Common myeloid progenitor, CD34-positive (primary cell): ENCODE measurements at regions of chr10 and their contacts with region 1.

Region 1: GRCh38 chr10:17409170-17409733 is 45.1 kb downstream of the ST8SIA6 start:
- DNase-seq: peak in 2 of 3 donors; percentile 53 to 56
- H3K4me3 ChIP-seq: no peak overlapping the region
- H3K27ac ChIP-seq: no peak overlapping the region
- H3K4me1 ChIP-seq: peaks cover 0 to 37% (median 18%) of the 10 kb centered on the region in 4 experiments
- H3K27me3 ChIP-seq: no peaks in the 10 kb centered on the region

Region 2: DNA sequence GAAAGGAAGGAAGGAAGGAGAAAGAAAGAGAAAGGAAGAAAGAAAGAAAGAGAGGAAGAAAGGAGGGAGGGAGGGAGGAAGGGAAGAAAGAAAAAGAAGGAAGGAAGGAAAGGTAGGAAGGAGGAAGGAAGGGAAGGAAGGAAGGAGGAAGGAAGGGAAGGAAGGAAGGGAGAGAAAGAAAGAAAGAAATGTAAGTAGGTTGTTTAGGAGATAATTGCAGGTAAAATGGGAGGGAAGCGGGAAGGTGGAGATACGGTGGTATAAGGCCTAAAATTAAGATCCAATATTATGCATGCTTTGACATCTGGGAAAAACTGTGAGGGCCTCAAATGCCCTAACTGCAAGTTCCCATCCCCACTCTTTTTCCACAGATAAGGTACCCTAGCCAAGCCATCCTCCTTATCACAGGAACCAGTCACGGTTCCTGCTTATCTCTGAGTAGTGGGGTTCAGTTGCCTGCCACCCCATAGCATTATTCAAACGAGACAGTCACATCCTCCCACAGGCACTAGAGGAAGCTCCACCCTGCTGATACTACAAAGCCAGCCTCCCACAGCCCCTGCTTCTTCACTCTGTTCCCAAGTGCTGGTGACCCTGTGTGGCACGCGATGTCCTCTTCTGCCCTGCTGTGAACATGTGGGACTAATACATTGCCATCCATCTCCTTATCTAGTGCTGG is 16.5 kb after region 1 on chr10:
- CTCF ChIA-PET with region 1: interaction called, 79 read pairs
- POLR2A ChIA-PET with region 1: interaction called, 9 read pairs
- DNase-seq: peak; percentile 95 to 97 (median 96)
- H3K4me3 ChIP-seq: peak overlapping the region in 3 of 7 experiments; percentile 3 to 37 (median 17)
- H3K27ac ChIP-seq: peak overlapping the region; percentile 96 to 97
- H3K4me1 ChIP-seq: peaks cover 19 to 88% (median 70%) of the 10 kb centered on the region in 4 experiments
- H3K27me3 ChIP-seq: no peaks in the 10 kb centered on the region

Region 3: GRCh38 chr10:17474595-17475323 is 65.5 kb after region 1 on chr10:
- CTCF ChIA-PET with region 1: interaction called, 13 read pairs
- POLR2A ChIA-PET with region 1: no interaction called
- DNase-seq: peak; percentile 54 to 59 (median 55)
- H3K4me3 ChIP-seq: peak overlapping the region in 3 of 7 experiments; percentile 6 to 25 (median 9)
- H3K27ac ChIP-seq: no peak overlapping the region
- H3K4me1 ChIP-seq: peaks cover 2 to 27% (median 16%) of the 10 kb centered on the region in 4 experiments
- H3K27me3 ChIP-seq: no peaks in the 10 kb centered on the region

Region 4: DNA sequence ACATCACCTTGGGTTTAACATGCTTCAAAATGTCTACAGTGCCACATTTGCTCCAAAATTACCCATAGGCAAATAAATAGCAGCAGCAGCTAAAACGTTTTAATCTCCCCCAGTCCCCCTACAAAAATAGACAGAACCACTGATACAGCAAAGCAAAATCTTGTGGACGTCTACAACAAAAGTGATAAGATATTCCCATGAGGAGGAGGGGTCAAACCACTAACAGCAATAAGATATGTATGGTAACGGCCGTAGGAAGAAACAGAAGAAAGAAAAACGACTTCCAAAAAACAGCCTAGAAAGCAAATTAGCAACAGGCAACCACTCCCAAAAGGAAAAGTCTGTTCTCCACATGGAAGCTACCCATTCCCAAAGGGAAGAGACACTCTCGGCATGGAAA is 79.6 kb after region 1 on chr10:
- CTCF ChIA-PET with region 1: no interaction called
- POLR2A ChIA-PET with region 1: no interaction called
- DNase-seq: no peak
- H3K4me3 ChIP-seq: no peak overlapping the region
- H3K27ac ChIP-seq: no peak overlapping the region
- H3K4me1 ChIP-seq: no peaks in the 10 kb centered on the region
- H3K27me3 ChIP-seq: no peaks in the 10 kb centered on the region